Left colon (tissue), 2 donors: ENCODE measurements at regions of chr2 and their contacts with region 1.

Region 1: GRCh38 chr2:224357098-224357901 is 44.6 kb downstream of the FAM124B start:
- DNase-seq: peak in 1 of 2 donors; percentile 38
- ATAC-seq: peak; percentile 86

Region 2: DNA sequence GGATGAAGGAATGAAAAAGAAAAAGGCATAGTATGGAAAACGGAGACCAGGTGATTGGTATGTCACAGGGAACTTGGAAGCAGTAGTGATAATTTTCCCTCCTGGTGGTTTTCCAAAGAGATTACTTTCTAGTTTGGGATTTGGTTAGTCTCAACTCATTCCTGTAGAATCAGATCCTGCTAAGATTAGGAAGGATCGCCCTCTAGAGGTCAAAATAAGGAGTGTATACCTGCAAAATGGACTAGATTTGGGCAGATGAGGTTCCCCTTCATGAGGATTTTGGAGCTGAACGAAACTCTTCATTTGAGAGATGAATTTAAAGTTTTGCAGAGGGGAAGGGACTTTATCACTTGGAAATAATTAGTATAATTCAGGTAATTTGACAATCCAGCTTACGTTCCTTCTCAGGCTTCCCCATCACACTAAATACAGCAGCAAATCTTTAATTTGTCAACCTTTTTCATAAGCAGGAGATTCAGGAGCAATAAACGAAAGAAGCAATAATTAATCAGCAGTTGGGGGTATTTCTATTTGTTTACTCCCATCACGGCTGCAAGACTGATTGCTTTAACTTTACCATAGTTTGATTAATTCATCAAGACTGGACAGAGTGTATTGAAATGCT is 293.6 kb after region 1 on chr2:
- intact Hi-C with region 1: loop called (anchors 5 to 10 kb)
- DNase-seq: no peak
- ATAC-seq: peak; percentile 67

Region 3: DNA sequence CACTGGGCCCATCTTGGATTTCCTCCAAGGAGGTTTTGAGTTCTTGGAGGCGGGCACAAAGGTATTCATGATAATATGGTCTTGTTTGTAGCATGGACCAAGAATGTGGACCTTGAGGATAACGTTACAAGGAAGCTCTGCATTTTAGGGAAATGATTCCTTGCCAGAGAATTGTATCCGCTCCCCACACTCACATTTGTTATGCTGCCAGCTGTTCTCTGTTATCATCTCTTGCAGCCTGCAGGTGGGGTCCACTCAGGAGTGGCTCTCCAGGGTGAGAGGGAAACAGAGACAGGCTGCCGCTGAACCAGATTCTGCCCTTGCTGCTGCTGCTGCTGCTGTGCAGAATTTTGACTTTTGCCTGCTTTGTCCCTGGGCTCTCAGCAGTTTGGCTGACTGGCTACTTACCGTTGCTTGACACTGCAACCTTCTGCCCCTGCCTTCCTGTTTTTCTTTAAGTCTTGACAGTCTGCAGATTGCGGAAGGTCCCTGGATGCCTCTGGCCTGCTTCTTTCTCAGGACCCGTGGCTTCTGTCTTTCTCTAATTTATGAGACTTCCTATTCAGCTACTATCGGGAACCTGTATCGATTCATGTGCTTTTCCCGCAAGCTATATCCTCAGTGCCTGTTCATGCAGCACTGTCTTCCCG is 807.2 kb after region 1 on chr2:
- intact Hi-C with region 1: no loop called
- DNase-seq: no peak
- ATAC-seq: no peak

Region 4: GRCh38 chr2:225411452-225411851 is 1054.2 kb after region 1 on chr2:
- intact Hi-C with region 1: no loop called
- DNase-seq: no peak
- ATAC-seq: no peak